ENCODE measurements at regions of chr7 and their contacts with region 1.

Region 1: GRCh38 chr7:102220960-102221800 is 65.5 kb upstream of the SH2B2 start:
- DNase-seq: no peak
- H3K4me3 ChIP-seq: no peak overlapping the region
- H3K27ac ChIP-seq: no peak overlapping the region
- H3K27me3 ChIP-seq: no peaks in the 10 kb centered on the region
- CTCF ChIP-seq: no peak

Region 2: GRCh38 chr7:101891936-101892640 is 329.1 kb before region 1 on chr7:
- intact Hi-C with region 1: loop called in 1 of 2 experiments (anchors 5 kb)
- DNase-seq: no peak
- H3K4me3 ChIP-seq: peak overlapping the region in 2 of 59 donors; percentile 3 to 6
- H3K27ac ChIP-seq: no peak overlapping the region
- H3K27me3 ChIP-seq: no peaks in the 10 kb centered on the region
- CTCF ChIP-seq: no peak

Region 3: DNA sequence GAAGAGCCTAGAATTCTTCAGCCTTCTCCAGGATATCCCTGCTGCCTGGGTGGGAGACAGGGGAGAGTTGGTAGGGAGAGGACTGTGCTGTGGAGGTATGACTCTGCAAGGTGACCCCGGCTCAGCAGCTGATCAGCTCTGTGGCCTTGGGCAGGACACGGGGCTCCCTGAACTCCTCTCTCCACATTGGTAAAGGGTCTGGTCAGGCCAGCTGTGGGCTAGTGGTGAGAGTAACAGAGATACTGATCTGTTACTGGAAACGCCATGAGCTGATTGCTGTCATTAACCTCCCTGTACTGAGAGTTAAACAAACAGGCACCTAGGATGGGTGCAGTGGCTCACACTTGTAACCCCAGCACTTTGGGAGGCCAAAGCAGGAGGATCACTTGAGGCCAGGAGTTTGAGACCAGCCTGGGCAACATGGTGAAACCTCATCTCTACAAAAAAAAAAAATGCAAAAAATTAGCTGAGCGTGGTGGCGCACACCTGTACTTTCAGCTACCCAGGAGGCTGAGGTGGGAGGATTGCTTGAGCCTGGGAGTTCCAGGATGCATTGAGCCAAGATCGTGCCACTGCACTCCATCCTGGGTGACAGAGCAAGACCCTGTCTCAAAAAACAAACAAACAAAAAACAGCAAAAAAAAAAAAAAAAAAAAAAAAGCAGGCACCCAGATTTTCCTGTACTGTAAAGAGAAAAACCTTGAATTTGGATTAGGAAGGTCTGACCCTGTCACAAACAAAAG is 252.3 kb before region 1 on chr7:
- intact Hi-C with region 1: no loop called
- DNase-seq: no peak
- H3K4me3 ChIP-seq: no peak overlapping the region
- H3K27ac ChIP-seq: no peak overlapping the region
- H3K27me3 ChIP-seq: no peaks in the 10 kb centered on the region
- CTCF ChIP-seq: no peak

Region 4: DNA sequence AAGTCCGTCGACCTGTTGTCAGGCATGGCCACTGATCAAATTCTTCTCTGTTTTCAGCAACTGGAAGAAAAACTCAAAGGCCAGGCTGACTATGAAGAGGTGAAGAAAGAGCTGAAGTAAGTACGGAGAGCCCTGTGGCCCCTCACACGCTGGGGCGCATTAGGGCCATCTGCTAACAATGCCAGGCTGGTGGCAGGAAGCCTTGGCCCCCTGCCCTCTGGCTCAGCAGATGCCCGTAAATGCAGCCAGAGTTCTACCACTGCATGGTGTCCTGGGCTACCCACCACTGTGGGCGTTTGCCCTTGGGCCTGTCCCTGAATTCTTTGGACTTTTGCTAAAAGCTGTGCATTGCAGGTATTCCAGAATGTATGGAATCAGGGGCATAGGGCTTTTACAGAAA is 31.4 kb before region 1 on chr7:
- intact Hi-C with region 1: no loop called
- DNase-seq: peak in 1 of 10 donors; percentile 68
- H3K4me3 ChIP-seq: no peak overlapping the region
- H3K27ac ChIP-seq: peak overlapping the region in 1 of 59 donors; percentile 34
- H3K27me3 ChIP-seq: no peaks in the 10 kb centered on the region
- CTCF ChIP-seq: no peak